Transverse colon (tissue), 4 donors: ENCODE measurements at regions of chr2 and their contacts with region 1.

Region 1: GRCh38 chr2:27024188-27024587 is 8.6 kb upstream of the TMEM214 start:
- DNase-seq: no peak
- H3K4me3 ChIP-seq: no peak overlapping the region
- H3K27ac ChIP-seq: no peak overlapping the region
- H3K4me1 ChIP-seq: peaks cover 17 to 30% (median 27%) of the 10 kb centered on the region in 4 donors
- H3K27me3 ChIP-seq: no peaks in the 10 kb centered on the region
- CTCF ChIP-seq: no peak
- EP300 ChIP-seq: no peak
- POLR2A ChIP-seq: no peak

Region 2: DNA sequence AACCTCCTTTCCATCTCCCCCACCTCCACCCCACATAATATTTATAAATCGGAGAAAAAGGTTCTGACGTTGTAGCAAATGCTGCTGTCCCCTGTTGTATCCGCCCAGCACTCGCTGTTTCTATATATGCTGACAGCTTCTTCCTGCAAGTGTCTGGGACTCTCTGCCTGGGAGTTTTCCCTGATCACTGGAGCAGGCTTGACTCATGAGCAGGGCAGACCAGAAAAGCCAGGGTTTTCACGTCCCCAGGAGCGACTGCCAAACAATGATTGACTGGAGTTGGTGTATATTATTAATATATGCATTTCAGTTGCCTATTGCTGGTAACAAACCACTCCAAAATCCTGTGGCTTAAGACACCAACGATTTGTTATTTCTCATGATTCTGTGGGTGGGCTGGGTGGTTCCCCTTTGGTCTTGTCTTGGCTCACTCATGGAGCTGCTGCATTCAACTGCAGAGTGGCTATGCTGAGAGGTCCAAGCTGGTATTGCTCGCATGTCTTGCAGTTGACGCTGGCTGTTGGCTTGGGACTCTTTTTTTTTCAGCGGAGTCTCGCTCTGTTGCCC is 1124.7 kb before region 1 on chr2:
- in situ Hi-C with region 1: no loop called
- intact Hi-C with region 1: loop called (anchors 5 kb)
- DNase-seq: no peak
- H3K4me3 ChIP-seq: no peak overlapping the region
- H3K27ac ChIP-seq: no peak overlapping the region
- H3K4me1 ChIP-seq: no peaks in the 10 kb centered on the region
- H3K27me3 ChIP-seq: no peaks in the 10 kb centered on the region
- CTCF ChIP-seq: no peak
- EP300 ChIP-seq: no peak
- POLR2A ChIP-seq: no peak

Region 3: DNA sequence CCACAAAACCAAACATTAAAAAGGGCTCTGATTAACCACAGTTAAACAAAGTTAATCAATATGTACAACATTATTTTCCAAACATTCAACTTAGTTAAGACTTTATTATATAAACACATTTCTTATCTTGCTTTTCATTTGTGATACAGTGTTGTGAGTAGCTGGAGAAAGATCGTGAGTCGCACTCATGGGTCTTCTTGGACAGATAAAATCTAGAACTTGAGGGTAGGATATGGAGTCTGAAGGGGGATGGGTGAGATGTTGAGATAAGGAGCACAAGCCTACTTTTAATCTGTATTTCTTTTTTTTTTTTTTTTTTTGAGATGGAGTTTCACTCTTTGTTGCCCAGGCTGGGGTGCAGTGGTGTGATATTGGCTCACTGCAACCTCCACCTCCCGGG is 14.0 kb before region 1 on chr2:
- in situ Hi-C with region 1: no loop called
- intact Hi-C with region 1: no loop called
- DNase-seq: no peak
- H3K4me3 ChIP-seq: no peak overlapping the region
- H3K27ac ChIP-seq: no peak overlapping the region
- H3K4me1 ChIP-seq: peaks cover 0 to 2% (median 0%) of the 10 kb centered on the region in 4 donors
- H3K27me3 ChIP-seq: no peaks in the 10 kb centered on the region
- CTCF ChIP-seq: no peak
- EP300 ChIP-seq: no peak
- POLR2A ChIP-seq: no peak